ENCODE measurements at regions of chr13 and their contacts with region 1.

Region 1: GRCh38 chr13:36337938-36338641 is 8.1 kb downstream of the SPART start:
- DNase-seq: no peak
- H3K4me3 ChIP-seq: no peak overlapping the region
- H3K27ac ChIP-seq: no peak overlapping the region
- H3K27me3 ChIP-seq: no peaks in the 10 kb centered on the region
- CTCF ChIP-seq: no peak

Region 2: GRCh38 chr13:36297366-36298338 is 40.4 kb before region 1 on chr13 and contains the start of gene CCDC169:
- intact Hi-C with region 1: loop called in 1 of 2 experiments (anchors 5 kb)
- DNase-seq: peak; percentile 28 to 84 (median 62)
- H3K4me3 ChIP-seq: peak within 1 kb of the TSS; percentile 51 to 92 (median 74)
- H3K27ac ChIP-seq: peak within 1 kb of the TSS in 16 of 59 donors; percentile 1 to 71 (median 24)
- H3K27me3 ChIP-seq: no peaks in the 10 kb centered on the region
- CTCF ChIP-seq: peak in 3 of 56 donors; percentile 5 to 14 (median 9)
- total RNA-seq, gene CCDC169: 0.84 to 8.8 (median 3.5) TPM

Region 3: DNA sequence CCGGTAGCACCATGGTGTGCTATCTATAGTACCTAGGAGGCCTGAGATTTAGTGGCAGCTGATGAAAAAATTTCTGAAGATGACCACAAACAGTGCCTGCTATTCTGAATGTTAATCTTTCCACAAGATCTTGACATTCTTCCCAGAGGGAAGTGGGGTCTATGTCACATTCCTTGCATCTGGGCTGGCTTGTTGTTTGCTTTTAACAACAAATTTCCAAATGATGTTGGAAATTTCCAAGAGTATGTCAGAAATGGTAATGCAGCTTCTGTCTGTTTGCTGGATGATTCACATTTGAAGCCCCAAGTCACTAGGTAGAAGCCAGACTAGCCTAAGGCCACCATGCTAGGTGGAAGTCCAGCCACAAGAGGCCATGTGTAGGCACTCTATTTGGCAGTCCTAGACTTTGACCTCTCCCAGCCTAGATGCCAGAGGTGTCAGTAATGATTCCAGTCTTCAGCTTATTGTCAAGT is 14.0 kb before region 1 on chr13:
- intact Hi-C with region 1: no loop called
- DNase-seq: no peak
- H3K4me3 ChIP-seq: no peak overlapping the region
- H3K27ac ChIP-seq: no peak overlapping the region
- H3K27me3 ChIP-seq: no peaks in the 10 kb centered on the region
- CTCF ChIP-seq: no peak

Measured in dorsolateral prefrontal cortex (tissue), 120 donors.